PC-9 (cell line): ENCODE measurements at regions of chr2 and their contacts with region 1.

Region 1: GRCh38 chr2:47323009-47323821 is 79.7 kb upstream of the MSH2 start:
- DNase-seq: peak; percentile 77 to 90
- H3K4me3 ChIP-seq: no peak overlapping the region; the same call in 1 of the 2 replicates
- H3K27ac ChIP-seq: peak overlapping the region; percentile 30
- H3K4me1 ChIP-seq: peaks cover 45% of the 10 kb centered on the region
- H3K27me3 ChIP-seq: no peaks in the 10 kb centered on the region
- CTCF ChIP-seq: peak; percentile 100

Region 2: GRCh38 chr2:46632349-46632748 is 690.9 kb before region 1 on chr2:
- CTCF ChIA-PET with region 1: interaction called, 3 read pairs
- POLR2A ChIA-PET with region 1: no interaction called
- intact Hi-C with region 1: loop called (anchors 2 kb)
- DNase-seq: peak in 1 of 2 experiments; percentile 60
- H3K4me3 ChIP-seq: no peak overlapping the region
- H3K27ac ChIP-seq: no peak overlapping the region
- H3K4me1 ChIP-seq: no peaks in the 10 kb centered on the region
- H3K27me3 ChIP-seq: no peaks in the 10 kb centered on the region
- CTCF ChIP-seq: peak; percentile 85

Region 3: GRCh38 chr2:46887028-46887885 is 436.0 kb before region 1 on chr2:
- CTCF ChIA-PET with region 1: interaction called, 3 read pairs
- POLR2A ChIA-PET with region 1: no interaction called
- intact Hi-C with region 1: loop called (anchors 1 kb)
- DNase-seq: peak; percentile 30 to 49
- H3K4me3 ChIP-seq: no peak overlapping the region
- H3K27ac ChIP-seq: no peak overlapping the region
- H3K4me1 ChIP-seq: peaks cover 13% of the 10 kb centered on the region
- H3K27me3 ChIP-seq: no peaks in the 10 kb centered on the region
- CTCF ChIP-seq: no peak

Region 4: DNA sequence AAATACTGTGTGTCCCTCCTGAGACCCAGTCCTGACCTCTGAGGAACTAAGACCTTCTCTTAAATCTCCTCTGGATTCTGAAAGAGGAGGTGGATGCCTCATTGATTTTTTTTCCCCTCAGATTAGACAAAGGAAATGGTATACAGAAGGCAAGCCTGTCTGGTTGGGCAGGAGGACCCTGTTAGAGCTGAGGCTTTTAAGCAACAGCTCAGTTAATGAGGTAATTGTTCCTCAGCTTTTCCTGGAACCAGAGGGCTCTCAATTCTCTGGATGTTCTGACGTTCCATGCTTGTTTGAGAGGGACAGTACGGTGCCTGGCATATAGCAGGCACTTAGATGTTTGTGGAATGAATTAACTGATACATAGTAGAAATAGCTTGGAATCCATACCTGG is 345.9 kb before region 1 on chr2:
- CTCF ChIA-PET with region 1: interaction called, 10 read pairs
- POLR2A ChIA-PET with region 1: no interaction called
- intact Hi-C with region 1: no loop called
- DNase-seq: no peak
- H3K4me3 ChIP-seq: no peak overlapping the region
- H3K27ac ChIP-seq: no peak overlapping the region
- H3K4me1 ChIP-seq: peaks cover 15% of the 10 kb centered on the region
- H3K27me3 ChIP-seq: no peaks in the 10 kb centered on the region
- CTCF ChIP-seq: no peak

Region 5: GRCh38 chr2:47076586-47077441 is 246.4 kb before region 1 on chr2:
- CTCF ChIA-PET with region 1: no interaction called
- POLR2A ChIA-PET with region 1: no interaction called
- intact Hi-C with region 1: loop called (anchors 1 kb)
- DNase-seq: peak; percentile 92 to 99
- H3K4me3 ChIP-seq: peak overlapping the region; percentile 7; the same call in 1 of the 2 replicates
- H3K27ac ChIP-seq: peak overlapping the region; percentile 94
- H3K4me1 ChIP-seq: peaks cover 64% of the 10 kb centered on the region
- H3K27me3 ChIP-seq: no peaks in the 10 kb centered on the region
- CTCF ChIP-seq: no peak